HCT116 (cell line): ENCODE measurements at regions of chr5 and their contacts with region 1.

Region 1: GRCh38 chr5:7261049-7261448 is 134.9 kb upstream of the ADCY2 start:
- DNase-seq: no peak
- ATAC-seq: no peak
- H3K4me3 ChIP-seq: no peak overlapping the region
- H3K27ac ChIP-seq: no peak overlapping the region
- H3K4me1 ChIP-seq: no peaks in the 10 kb centered on the region
- H3K27me3 ChIP-seq: no peaks in the 10 kb centered on the region
- CTCF ChIP-seq: 0 out of 6 replicates have a peak, but pooled peaks of 1 of the 3 experiments have one; percentile 19
- POLR2A ChIP-seq: no peak
- RAD21 ChIP-seq: 0 out of 2 replicates have a peak, but pooled peaks have one; percentile 16

Region 2: GRCh38 chr5:7586475-7586874 is 325.4 kb after region 1 on chr5:
- CTCF ChIA-PET with region 1: no interaction called
- POLR2A ChIA-PET with region 1: no interaction called
- RAD21 ChIA-PET with region 1: no interaction called
- intact Hi-C with region 1: no loop called
- DNase-seq: no peak
- ATAC-seq: no peak
- H3K4me3 ChIP-seq: no peak overlapping the region
- H3K27ac ChIP-seq: no peak overlapping the region
- H3K4me1 ChIP-seq: no peaks in the 10 kb centered on the region
- H3K27me3 ChIP-seq: no peaks in the 10 kb centered on the region
- CTCF ChIP-seq: no peak
- POLR2A ChIP-seq: no peak
- RAD21 ChIP-seq: no peak

Region 3: DNA sequence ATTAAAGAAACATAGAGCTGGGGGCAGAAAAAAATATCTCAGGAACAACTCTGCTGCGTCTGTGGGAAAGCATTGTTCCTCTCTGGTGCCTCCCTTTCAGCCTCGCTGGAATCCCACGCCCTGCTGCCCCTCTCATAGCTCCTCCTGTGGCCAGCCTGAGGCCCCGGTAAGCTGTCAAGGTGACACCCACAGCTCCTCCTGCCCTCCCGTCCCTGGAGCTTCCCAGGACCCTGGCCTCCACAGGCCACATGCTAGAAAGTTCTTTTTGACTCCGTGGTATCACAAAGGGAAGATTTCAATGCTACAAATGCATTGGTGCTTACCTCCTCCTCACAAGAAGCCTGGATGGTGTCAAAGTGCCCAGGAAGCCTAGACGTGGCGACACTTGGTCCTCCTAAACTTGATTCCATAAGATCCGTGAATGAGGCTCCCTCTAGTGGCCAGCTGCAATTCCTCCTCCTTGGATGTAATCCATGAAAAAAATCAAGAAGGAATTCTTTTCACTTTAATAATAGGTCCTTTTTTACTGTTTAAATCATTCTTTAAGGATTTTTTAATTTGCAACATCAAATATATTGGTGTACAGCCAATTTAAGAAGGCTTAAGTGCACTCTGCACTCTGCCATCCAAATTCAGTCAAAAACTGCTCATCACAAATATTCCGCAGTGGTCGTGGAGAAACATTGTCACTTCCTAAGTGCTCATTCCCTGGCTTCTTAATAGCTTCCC is 485.0 kb after region 1 on chr5:
- CTCF ChIA-PET with region 1: no interaction called
- POLR2A ChIA-PET with region 1: no interaction called
- RAD21 ChIA-PET with region 1: no interaction called
- intact Hi-C with region 1: loop called (anchors 5 kb)
- DNase-seq: peak; percentile 41
- ATAC-seq: peak; percentile 77
- H3K4me3 ChIP-seq: no peak overlapping the region
- H3K27ac ChIP-seq: no peak overlapping the region
- H3K4me1 ChIP-seq: no peaks in the 10 kb centered on the region
- H3K27me3 ChIP-seq: no peaks in the 10 kb centered on the region
- CTCF ChIP-seq: peak; percentile 50 to 92 (median 83); a peak in 5 of 6 replicates
- POLR2A ChIP-seq: no peak
- RAD21 ChIP-seq: peak; percentile 60